ENCODE measurements at regions of chr2 and their contacts with region 1.

Region 1: DNA sequence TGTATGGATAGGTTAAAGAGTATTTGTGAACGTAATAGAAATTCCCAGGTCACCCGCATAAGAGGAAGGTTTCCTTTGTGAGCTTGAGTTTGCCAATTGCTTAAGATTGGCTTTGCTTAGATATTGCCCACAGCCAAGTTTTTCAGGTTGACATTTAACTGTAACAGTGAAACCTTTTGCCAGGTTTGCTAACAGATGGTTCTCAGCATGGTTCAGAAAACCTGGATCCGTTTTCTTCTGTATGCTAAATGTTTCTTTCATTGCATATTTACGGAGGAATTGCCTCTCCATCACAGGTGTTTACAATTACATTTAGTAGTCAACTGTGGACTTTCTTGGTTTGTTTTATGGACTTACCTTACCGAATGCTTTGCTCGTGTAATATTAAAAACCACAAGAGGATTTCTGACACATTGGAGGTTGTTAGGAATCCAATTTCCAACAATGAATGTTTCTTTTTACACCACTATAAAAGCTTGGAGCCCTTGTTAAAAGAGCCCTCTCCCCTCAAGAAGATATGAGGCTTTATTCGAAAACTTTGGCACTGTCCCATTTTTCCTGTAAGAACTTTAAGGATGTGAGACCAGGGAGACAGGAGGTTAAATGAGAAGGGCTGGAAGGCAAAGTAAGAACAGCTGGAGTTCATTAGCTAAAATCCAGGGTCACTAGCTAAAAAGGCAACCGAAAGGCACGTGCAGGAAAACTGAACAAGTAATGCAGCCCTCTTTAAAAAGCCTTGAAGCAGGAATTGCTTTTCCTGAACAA is 7.8 kb downstream of the CDK15 start:
- DNase-seq: no peak
- H3K4me3 ChIP-seq: no peak overlapping the region
- H3K27ac ChIP-seq: no peak overlapping the region
- H3K4me1 ChIP-seq: no peaks in the 10 kb centered on the region
- H3K27me3 ChIP-seq: no peaks in the 10 kb centered on the region
- CTCF ChIP-seq: no peak
- EP300 ChIP-seq: no peak
- POLR2A ChIP-seq: no peak

Region 2: DNA sequence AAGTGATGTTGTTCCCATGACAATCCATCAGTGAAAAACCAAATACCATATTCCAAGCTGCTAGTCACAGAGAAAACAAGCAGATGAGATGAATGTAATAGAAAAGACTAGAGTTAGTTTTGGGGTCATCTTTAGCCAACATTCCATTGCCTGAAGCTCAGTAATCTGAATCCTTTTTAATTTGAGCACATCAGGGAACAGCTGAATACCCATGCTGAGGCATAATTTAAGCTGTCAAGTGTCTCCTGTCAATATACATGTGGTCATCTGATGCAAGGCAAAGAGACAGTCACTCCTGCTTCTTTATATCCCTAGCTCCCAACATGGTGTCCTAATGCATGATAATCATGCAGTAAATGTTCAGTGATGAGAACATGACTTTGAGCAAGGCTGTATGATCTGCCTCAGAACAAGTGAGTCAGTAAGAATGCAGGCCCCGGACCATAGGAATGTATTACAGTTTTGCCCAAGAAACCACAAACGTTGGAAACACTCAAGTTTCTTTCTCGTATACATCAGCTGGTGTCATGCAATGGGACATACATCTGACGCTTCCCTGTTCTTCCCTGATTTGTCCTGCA is 40.1 kb after region 1 on chr2:
- intact Hi-C with region 1: loop called in 2 of 4 experiments (anchors 5 to 10 kb)
- DNase-seq: no peak
- H3K4me3 ChIP-seq: no peak overlapping the region
- H3K27ac ChIP-seq: no peak overlapping the region
- H3K4me1 ChIP-seq: peaks cover 5% of the 10 kb centered on the region
- H3K27me3 ChIP-seq: no peaks in the 10 kb centered on the region
- CTCF ChIP-seq: no peak
- EP300 ChIP-seq: no peak
- POLR2A ChIP-seq: no peak

Measured in ovary (tissue), 10 donors.